ENCODE measurements at regions of chr4 and their contacts with region 1.

Region 1: GRCh38 chr4:80202190-80202711 is 4.9 kb downstream of the PRDM8 start:
- DNase-seq: peak; percentile 58 to 86 (median 80)
- ATAC-seq: peak; percentile 62
- H3K4me3 ChIP-seq: peak overlapping the region; percentile 67 to 75
- H3K4me3 Mint-ChIP-seq: peak overlapping the region; percentile 83
- H3K27ac ChIP-seq: peak overlapping the region; percentile 48 to 66
- H3K27ac Mint-ChIP-seq: peak overlapping the region; percentile 73
- H3K4me1 ChIP-seq: peaks cover 16% of the 10 kb centered on the region
- H3K4me1 Mint-ChIP-seq: peaks cover 24% of the 10 kb centered on the region
- H3K27me3 ChIP-seq: peaks cover 0 to 4% of the 10 kb centered on the region in 2 experiments
- H3K27me3 Mint-ChIP-seq: peaks cover 10% of the 10 kb centered on the region
- CTCF ChIP-seq: peak; percentile 78

Region 2: GRCh38 chr4:78938868-78939666 is 1263.2 kb before region 1 on chr4 and contains the start of gene PAQR3:
- CTCF ChIA-PET with region 1: interaction called, 5 read pairs
- POLR2A ChIA-PET with region 1: no interaction called
- intact Hi-C with region 1: loop called in 1 of 2 experiments (anchors 10 kb)
- DNase-seq: peak; percentile 67 to 92 (median 83)
- ATAC-seq: peak; percentile 96
- H3K4me3 ChIP-seq: peak within 1 kb of the TSS; percentile 88 to 89
- H3K4me3 Mint-ChIP-seq: peak within 1 kb of the TSS; percentile 90
- H3K27ac ChIP-seq: peak within 1 kb of the TSS; percentile 67 to 77
- H3K27ac Mint-ChIP-seq: peak within 1 kb of the TSS; percentile 86
- H3K4me1 ChIP-seq: peaks cover 26% of the 10 kb centered on the region
- H3K4me1 Mint-ChIP-seq: peaks cover 40% of the 10 kb centered on the region
- H3K27me3 ChIP-seq: no peaks in the 10 kb centered on the region
- H3K27me3 Mint-ChIP-seq: peaks cover 11% of the 10 kb centered on the region
- CTCF ChIP-seq: no peak
- total RNA-seq, gene PAQR3: 17.8 to 19.3 TPM

Region 3: DNA sequence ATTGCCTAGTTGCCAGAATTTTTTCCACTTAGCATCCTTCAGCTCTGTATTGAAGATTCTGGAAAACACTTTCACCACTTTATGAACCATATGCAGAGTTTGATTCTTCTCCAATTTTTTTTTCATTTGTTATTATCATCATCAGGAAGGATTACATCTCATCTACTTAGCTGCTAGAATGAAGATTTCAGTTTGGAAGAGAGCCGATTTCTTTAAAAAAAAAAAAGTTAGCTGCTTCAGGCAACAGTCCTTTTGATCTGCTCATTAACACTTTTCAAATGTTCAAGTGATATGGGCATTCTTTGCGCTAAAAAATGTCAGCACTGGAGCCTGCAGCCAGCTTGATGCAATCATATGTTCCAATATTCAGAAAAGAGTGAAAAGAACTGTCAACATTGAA is 205.4 kb before region 1 on chr4:
- CTCF ChIA-PET with region 1: no interaction called
- POLR2A ChIA-PET with region 1: no interaction called
- intact Hi-C with region 1: no loop called
- DNase-seq: no peak
- ATAC-seq: no peak
- H3K4me3 ChIP-seq: no peak overlapping the region
- H3K4me3 Mint-ChIP-seq: no peak overlapping the region
- H3K27ac ChIP-seq: no peak overlapping the region
- H3K27ac Mint-ChIP-seq: no peak overlapping the region
- H3K4me1 ChIP-seq: no peaks in the 10 kb centered on the region
- H3K4me1 Mint-ChIP-seq: peaks cover 23% of the 10 kb centered on the region
- H3K27me3 ChIP-seq: no peaks in the 10 kb centered on the region
- H3K27me3 Mint-ChIP-seq: no peaks in the 10 kb centered on the region
- CTCF ChIP-seq: no peak

Region 4: DNA sequence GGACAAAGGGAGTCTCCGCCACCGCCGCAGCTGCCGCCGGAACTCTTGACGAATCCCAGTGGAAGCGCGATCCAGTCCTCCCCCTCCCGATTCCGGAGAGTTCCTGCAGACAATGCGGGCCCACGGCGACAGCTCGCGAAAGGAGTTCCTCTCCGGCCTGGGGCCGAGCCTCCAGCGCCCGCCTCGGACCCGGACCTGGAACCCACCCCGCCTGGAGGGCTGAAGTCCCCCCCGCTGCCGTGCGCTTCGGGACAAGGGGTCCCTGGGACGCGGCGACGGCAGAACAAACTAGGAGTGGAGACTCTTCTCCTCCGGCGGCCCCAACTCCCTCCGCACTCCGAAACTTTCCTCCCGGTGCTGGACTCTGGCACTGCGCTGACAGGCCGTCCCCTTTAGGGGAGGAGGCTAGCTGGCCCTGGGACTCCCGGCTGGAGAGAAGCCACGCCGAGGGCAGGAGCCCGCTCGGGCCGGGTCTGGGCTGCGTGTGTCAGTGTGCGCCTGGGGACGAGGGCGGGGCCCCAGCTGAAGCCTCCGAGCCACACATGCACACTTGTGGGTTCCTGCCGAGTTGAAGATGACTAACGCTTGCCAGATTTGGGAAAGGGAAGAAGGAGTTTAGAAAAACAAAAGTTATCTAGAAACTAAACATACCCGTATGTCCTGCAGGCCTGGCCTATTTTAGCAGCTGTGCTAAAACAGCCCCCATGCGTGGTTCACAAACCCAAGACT is 129.3 kb before region 1 on chr4 and contains the start of gene ANTXR2:
- CTCF ChIA-PET with region 1: interaction called, 14 read pairs
- POLR2A ChIA-PET with region 1: interaction called, 14 read pairs
- intact Hi-C with region 1: loop called (anchors 2 to 5 kb)
- DNase-seq: peak; percentile 35 to 82 (median 70)
- ATAC-seq: peak; percentile 77
- H3K4me3 ChIP-seq: peak within 1 kb of the TSS; percentile 79 to 80
- H3K4me3 Mint-ChIP-seq: peak within 1 kb of the TSS; percentile 97
- H3K27ac ChIP-seq: peak within 1 kb of the TSS; percentile 69 to 70
- H3K27ac Mint-ChIP-seq: peak within 1 kb of the TSS; percentile 96
- H3K4me1 ChIP-seq: peaks cover 30% of the 10 kb centered on the region
- H3K4me1 Mint-ChIP-seq: peaks cover 53% of the 10 kb centered on the region
- H3K27me3 ChIP-seq: no peaks in the 10 kb centered on the region
- H3K27me3 Mint-ChIP-seq: no peaks in the 10 kb centered on the region
- CTCF ChIP-seq: no peak
- total RNA-seq, gene ANTXR2: 6.9 to 8.6 TPM

Region 5: GRCh38 chr4:80173401-80173800 is 28.9 kb before region 1 on chr4:
- CTCF ChIA-PET with region 1: interaction called, 158 read pairs
- POLR2A ChIA-PET with region 1: interaction called, 15 read pairs
- intact Hi-C with region 1: no loop called
- DNase-seq: peak in 8 of 9 experiments; percentile 34 to 89 (median 62)
- ATAC-seq: peak; percentile 96
- H3K4me3 ChIP-seq: peak overlapping the region in 1 of 2 experiments; percentile 1
- H3K4me3 Mint-ChIP-seq: peak overlapping the region; percentile 36
- H3K27ac ChIP-seq: peak overlapping the region; percentile 3 to 68
- H3K27ac Mint-ChIP-seq: peak overlapping the region; percentile 95
- H3K4me1 ChIP-seq: peaks cover 33% of the 10 kb centered on the region
- H3K4me1 Mint-ChIP-seq: peaks cover 55% of the 10 kb centered on the region
- H3K27me3 ChIP-seq: no peaks in the 10 kb centered on the region
- H3K27me3 Mint-ChIP-seq: no peaks in the 10 kb centered on the region
- CTCF ChIP-seq: no peak

Region 6: GRCh38 chr4:81052119-81053068 is 850.1 kb after region 1 on chr4:
- CTCF ChIA-PET with region 1: no interaction called
- POLR2A ChIA-PET with region 1: no interaction called
- intact Hi-C with region 1: loop called in 1 of 2 experiments (anchors 5 kb)
- DNase-seq: peak; percentile 14 to 73 (median 48)
- ATAC-seq: peak; percentile 42
- H3K4me3 ChIP-seq: no peak overlapping the region
- H3K4me3 Mint-ChIP-seq: no peak overlapping the region
- H3K27ac ChIP-seq: no peak overlapping the region
- H3K27ac Mint-ChIP-seq: no peak overlapping the region
- H3K4me1 ChIP-seq: no peaks in the 10 kb centered on the region
- H3K4me1 Mint-ChIP-seq: no peaks in the 10 kb centered on the region
- H3K27me3 ChIP-seq: no peaks in the 10 kb centered on the region
- H3K27me3 Mint-ChIP-seq: peaks cover 2% of the 10 kb centered on the region
- CTCF ChIP-seq: peak; percentile 45

Measured in CD8-positive, alpha-beta T cell (primary cell).